ENCODE measurements at regions of chr18 and their contacts with region 1.

Region 1: DNA sequence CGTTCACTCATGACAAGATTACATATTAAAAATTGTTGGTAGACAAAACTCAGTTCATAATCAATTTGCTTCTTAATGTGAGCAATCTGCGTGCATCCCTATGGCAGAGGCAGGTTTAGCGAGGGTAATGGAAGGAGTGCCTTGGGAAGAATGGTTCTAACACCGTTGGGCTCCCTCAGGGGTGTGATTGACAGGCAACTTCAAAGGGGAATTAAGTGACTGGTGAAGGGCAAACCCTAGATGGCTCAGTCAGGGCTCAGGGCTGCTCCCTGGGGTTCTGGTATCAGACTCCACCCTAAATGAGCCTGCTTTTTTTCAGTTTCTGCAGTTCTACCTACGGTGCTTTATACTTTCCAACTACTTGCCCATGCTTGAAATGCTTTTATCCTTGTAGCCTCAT is 419.5 kb upstream of the CELF4 start:
- DNase-seq: no peak
- ATAC-seq: no peak
- H3K4me3 ChIP-seq: no peak overlapping the region
- H3K27ac ChIP-seq: no peak overlapping the region
- H3K4me1 ChIP-seq: no peaks in the 10 kb centered on the region
- H3K27me3 ChIP-seq: peaks cover 0 to 3% (median 0%) of the 10 kb centered on the region in 7 donors
- CTCF ChIP-seq: no peak

Region 2: GRCh38 chr18:37218022-37218590 is 767.0 kb before region 1 on chr18:
- intact Hi-C with region 1: loop called in 1 of 10 experiments (anchors 10 kb)
- DNase-seq: no peak
- ATAC-seq: no peak
- H3K4me3 ChIP-seq: no peak overlapping the region
- H3K27ac ChIP-seq: no peak overlapping the region
- H3K4me1 ChIP-seq: no peaks in the 10 kb centered on the region
- H3K27me3 ChIP-seq: no peaks in the 10 kb centered on the region
- CTCF ChIP-seq: no peak